ENCODE measurements at regions of chr2 and their contacts with region 1.

Region 1: GRCh38 chr2:226733189-226733858 is 66.3 kb downstream of the IRS1 start:
- DNase-seq: no peak

Region 2: DNA sequence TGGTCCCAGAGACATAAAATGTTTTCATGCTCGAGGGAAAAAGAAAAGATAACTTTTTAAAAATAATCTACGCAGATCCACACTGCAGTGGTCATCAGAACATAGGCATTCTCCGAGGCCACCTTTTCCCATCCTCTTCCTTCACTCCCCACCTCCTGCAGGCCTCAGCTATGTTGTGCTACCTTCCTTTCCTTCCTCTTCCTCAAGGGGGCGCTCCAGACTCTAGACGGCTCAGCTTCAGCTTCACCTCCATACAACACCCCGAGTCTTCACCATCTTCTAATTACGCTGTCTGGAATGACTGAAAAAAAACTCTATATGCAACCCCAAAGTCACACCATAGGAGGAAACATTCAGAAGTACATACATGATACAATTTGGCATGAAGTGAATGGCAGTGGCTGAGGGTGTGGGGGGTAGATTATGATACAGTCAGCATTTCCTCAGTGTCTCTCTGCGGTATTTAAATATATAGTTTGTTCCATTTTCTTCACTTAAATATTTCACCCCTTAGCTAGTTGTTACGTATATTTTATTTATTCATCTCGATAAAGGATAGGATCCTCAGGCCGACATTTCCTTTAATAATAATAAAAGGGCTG is 517.3 kb before region 1 on chr2:
- intact Hi-C with region 1: loop called (anchors 5 kb)
- DNase-seq: no peak

Region 3: GRCh38 chr2:226631671-226632070 is 101.7 kb before region 1 on chr2:
- intact Hi-C with region 1: no loop called
- DNase-seq: no peak